Psoas muscle (tissue), 8 donors: ENCODE measurements at regions of chr7 and their contacts with region 1.

Region 1: GRCh38 chr7:116618338-116619128 is 53.5 kb upstream of the MET start:
- DNase-seq: no peak
- ATAC-seq: no peak
- H3K4me3 ChIP-seq: no peak overlapping the region
- H3K27ac ChIP-seq: no peak overlapping the region
- H3K4me1 ChIP-seq: no peaks in the 10 kb centered on the region
- H3K27me3 ChIP-seq: no peaks in the 10 kb centered on the region
- CTCF ChIP-seq: no peak

Region 2: GRCh38 chr7:116554436-116554835 is 64.1 kb before region 1 on chr7:
- intact Hi-C with region 1: loop called in 1 of 2 experiments (anchors 2 kb)
- DNase-seq: no peak
- ATAC-seq: no peak
- H3K4me3 ChIP-seq: no peak overlapping the region
- H3K27ac ChIP-seq: no peak overlapping the region
- H3K4me1 ChIP-seq: no peaks in the 10 kb centered on the region
- H3K27me3 ChIP-seq: peaks cover 0 to 4% (median 0%) of the 10 kb centered on the region in 3 donors
- CTCF ChIP-seq: no peak

Region 3: GRCh38 chr7:116661865-116662264 is 43.3 kb after region 1 on chr7:
- intact Hi-C with region 1: no loop called
- DNase-seq: no peak
- ATAC-seq: no peak
- H3K4me3 ChIP-seq: no peak overlapping the region
- H3K27ac ChIP-seq: no peak overlapping the region
- H3K4me1 ChIP-seq: peaks cover 6% of the 10 kb centered on the region
- H3K27me3 ChIP-seq: no peaks in the 10 kb centered on the region
- CTCF ChIP-seq: no peak